ENCODE measurements at regions of chr17 and their contacts with region 1.

Region 1: DNA sequence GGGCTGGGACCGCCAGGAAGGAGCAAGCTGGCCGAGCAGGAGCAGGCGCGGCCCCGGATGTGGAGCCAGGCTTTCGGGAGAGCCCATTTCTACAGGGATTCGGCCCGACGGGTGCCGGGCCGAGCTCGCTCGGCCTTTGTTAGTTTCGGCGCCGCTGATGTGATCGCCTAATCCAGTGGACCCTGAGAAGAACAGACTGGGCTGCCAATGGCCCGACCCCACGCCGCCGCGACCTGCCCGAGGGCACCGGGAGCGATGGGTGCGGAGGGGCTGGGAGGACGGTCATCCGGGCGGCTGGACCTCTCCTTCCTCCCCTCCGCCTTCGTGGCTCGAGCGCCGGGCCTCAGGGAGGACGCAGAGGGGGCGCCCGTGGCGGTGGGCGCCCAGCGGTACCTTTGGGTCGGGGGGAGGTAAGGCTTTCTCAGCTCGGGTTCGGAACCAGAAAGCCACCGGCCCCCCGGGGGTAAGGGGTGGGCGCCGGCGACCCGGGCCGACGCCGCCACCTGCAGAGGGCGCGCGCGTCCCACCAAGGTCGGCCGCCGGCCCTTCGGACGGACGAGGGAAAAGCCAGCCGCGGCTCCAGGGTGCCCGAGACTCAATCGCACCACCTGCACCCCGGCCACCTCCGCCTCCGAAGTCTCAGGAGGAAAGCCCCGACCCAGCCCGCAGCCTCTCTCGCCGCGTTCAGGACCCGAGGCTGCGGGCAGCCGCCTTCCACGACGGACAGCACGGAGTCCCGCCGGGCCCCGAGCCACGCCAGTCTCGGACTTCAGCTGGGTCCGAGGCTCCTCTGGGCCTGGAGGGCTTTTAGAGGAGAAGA is 7.1 kb downstream of the CBX8 start:
- DNase-seq: no peak
- H3K4me3 ChIP-seq: peak overlapping the region in 3 of 4 donors; percentile 21 to 40 (median 30)
- H3K27ac ChIP-seq: no peak overlapping the region
- H3K4me1 ChIP-seq: peaks cover 29 to 56% (median 53%) of the 10 kb centered on the region in 4 donors
- H3K27me3 ChIP-seq: peaks cover 35 to 99% (median 52%) of the 10 kb centered on the region in 4 donors
- CTCF ChIP-seq: peak; percentile 79 to 91 (median 86)
- EP300 ChIP-seq: no peak
- POLR2A ChIP-seq: no peak

Region 2: DNA sequence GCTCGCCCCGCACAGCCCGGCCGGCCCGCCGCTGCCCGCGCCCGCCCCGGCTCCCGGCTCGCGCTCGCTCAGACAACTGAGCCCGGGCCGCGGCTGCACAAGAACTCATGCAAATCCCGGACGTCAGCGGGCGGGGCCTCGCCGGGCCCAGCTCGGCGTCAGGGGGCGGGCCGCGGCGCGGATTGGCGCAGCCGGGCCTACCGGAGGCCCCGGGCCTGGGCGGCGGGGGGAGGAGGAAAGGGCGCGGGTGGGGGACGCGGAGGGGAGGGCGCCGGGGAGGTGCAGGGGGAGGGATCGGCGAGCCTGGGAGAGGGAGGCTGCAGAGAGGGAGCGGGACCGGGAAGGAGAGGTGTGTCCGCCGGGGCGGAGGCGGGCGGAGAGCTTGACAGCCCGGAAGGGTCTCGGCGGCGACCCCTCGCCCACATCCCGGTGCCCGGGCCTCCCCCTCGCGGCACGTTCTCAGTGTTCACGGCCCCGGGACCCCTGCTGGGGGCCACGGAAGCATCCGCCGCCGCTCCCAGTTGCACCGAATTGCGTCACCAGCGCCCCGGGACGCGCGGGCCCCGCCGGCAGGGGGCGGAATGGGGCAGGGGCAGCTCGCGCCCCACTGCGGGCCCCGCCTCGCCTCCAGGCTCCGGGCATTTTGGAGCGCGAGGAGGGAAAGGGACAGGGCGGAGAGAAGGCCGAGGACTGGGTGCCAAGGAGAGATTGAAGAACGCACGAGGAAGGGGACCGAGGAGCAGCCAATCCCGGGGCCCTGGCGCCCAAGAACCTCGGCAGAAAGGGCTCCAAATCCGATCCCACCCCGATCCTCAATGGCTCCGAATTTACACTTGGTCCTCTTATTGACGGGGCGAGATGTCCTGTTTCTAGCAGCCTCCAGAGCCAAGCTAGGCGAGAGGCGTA is 49.9 kb after region 1 on chr17 and contains the start of gene CBX4:
- intact Hi-C with region 1: loop called (anchors 2 kb)
- DNase-seq: peak; percentile 98
- H3K4me3 ChIP-seq: peak within 1 kb of the TSS; percentile 56 to 90 (median 74)
- H3K27ac ChIP-seq: peak within 1 kb of the TSS; percentile 97 to 98 (median 98)
- H3K4me1 ChIP-seq: peaks cover 69 to 86% (median 82%) of the 10 kb centered on the region in 4 donors
- H3K27me3 ChIP-seq: peaks cover 23 to 50% (median 41%) of the 10 kb centered on the region in 4 donors
- CTCF ChIP-seq: peak; percentile 59 to 66 (median 65)
- EP300 ChIP-seq: no peak
- POLR2A ChIP-seq: no peak
- total RNA-seq, gene CBX4: 6.6 to 14.1 (median 12.3) TPM

Region 3: GRCh38 chr17:79915850-79916430 is 126.2 kb after region 1 on chr17:
- intact Hi-C with region 1: loop called (anchors 5 kb)
- DNase-seq: no peak
- H3K4me3 ChIP-seq: no peak overlapping the region
- H3K27ac ChIP-seq: no peak overlapping the region
- H3K4me1 ChIP-seq: peaks cover 15 to 17% (median 16%) of the 10 kb centered on the region in 4 donors
- H3K27me3 ChIP-seq: peaks cover 0 to 86% (median 8%) of the 10 kb centered on the region in 4 donors
- CTCF ChIP-seq: peak; percentile 26 to 39 (median 31)
- EP300 ChIP-seq: no peak
- POLR2A ChIP-seq: no peak